Activated CD4-positive, alpha-beta T cell treated with anti-CD3 and anti-CD28 coated beads for 36 hours (primary cell): ENCODE measurements at regions of chr20 and their contacts with region 1.

Region 1: GRCh38 chr20:38033310-38034107 is at the starts of genes RPRD1B and TTI1:
- DNase-seq: peak; percentile 93
- ATAC-seq: peak; percentile 85
- H3K4me3 Mint-ChIP-seq: peak within 1 kb of the TSS; percentile 94
- H3K27ac Mint-ChIP-seq: peak within 1 kb of the TSS; percentile 98
- H3K4me1 Mint-ChIP-seq: peaks cover 65% of the 10 kb centered on the region
- H3K27me3 Mint-ChIP-seq: no peaks in the 10 kb centered on the region
- total RNA-seq, gene RPRD1B: 29.9 to 36.4 TPM
- total RNA-seq, gene TTI1: 35.6 to 36.7 TPM

Region 2: DNA sequence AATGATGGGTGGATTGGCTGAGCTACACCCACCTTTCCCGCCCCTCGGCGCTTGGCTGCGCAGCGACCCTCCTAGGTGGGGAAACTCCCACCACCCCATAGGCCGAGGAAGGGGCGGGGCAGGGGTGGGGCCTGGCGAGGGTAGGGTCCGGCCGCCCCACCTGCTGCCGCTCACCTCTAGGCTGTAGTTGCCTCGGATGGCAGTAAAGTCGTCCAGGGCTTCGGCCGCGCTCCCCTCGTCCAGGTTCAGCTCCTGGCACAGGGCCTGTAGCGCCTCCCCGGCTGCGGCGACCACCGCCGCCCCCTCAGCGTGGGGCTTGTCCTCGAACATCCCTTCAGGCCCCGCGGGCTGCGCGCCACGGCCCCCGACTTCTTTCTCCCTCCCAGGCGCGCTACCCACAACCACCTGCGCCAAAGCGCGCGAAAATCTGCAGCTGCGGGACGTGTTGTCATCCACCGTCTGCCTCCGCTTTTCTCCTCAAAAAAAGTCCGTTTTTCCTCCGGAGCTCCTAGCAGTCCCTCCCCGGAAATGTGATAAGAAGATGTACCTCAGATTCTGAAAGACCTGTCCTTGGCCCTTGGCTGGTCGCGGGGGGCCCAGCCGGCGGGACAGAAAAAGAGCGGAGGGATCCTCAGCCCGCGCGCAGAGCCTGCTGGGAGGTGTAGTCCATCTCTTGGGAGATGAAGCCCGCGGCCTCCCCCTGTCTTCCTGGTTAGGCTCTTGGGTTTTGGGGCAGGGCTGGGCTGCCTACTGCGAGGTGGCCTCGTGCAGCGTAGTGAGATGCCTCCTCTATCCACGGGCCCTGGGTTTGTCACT is 937.7 kb before region 1 on chr20 and contains the start of gene RBL1:
- CTCF ChIA-PET with region 1: no interaction called
- POLR2A ChIA-PET with region 1: no interaction called
- intact Hi-C with region 1: loop called in 1 of 2 experiments (anchors 2 kb)
- DNase-seq: peak; percentile 94
- ATAC-seq: peak; percentile 83
- H3K4me3 Mint-ChIP-seq: peak within 1 kb of the TSS; percentile 95
- H3K27ac Mint-ChIP-seq: peak within 1 kb of the TSS; percentile 100
- H3K4me1 Mint-ChIP-seq: peaks cover 26% of the 10 kb centered on the region
- H3K27me3 Mint-ChIP-seq: no peaks in the 10 kb centered on the region
- total RNA-seq, gene RBL1: 39.5 to 43.2 TPM

Region 3: GRCh38 chr20:37226889-37227288 is 806.6 kb before region 1 on chr20:
- CTCF ChIA-PET with region 1: no interaction called
- POLR2A ChIA-PET with region 1: no interaction called
- intact Hi-C with region 1: no loop called
- DNase-seq: no peak
- ATAC-seq: no peak
- H3K4me3 Mint-ChIP-seq: no peak overlapping the region
- H3K27ac Mint-ChIP-seq: no peak overlapping the region
- H3K4me1 Mint-ChIP-seq: no peaks in the 10 kb centered on the region
- H3K27me3 Mint-ChIP-seq: no peaks in the 10 kb centered on the region

Region 4: DNA sequence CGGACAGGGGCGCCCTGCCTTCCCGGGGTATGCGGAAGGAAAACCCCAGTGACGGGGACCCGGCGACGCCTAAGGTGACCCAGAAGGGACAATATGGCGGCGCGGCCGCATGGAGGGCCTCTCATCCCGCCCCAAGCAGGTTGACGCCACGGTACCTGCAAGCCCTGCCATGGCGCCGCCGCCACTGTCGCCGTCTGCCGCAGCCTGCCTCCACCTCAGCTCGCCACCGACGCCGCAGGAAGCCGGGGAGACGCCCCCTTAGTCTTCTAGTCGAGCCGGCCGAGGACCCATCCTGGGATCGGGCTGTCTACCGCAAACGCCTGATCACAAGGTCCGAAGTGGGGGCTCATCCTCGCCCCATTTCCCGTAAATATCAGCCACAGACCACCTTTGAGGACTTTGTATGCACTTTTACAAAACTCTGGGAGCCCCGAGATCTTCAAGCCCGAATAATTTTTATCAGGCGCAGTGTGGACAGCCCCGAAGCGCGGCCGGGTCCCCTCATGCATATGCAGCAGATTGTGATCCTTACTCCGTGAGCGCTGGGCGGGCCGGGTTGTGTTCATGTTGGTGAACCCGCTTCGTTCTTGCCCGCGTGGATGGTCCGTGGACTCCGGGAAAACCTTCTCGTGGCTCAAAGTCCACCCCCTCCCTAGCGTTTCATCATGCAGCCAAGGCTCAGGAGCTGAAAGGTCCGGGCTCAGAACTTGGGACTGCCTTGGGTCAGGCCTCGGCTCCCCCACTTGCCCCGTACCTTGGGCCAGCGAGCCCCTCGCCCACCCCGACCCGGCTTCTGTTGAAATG is 505.7 kb before region 1 on chr20 and contains the start of gene BLCAP:
- CTCF ChIA-PET with region 1: no interaction called
- POLR2A ChIA-PET with region 1: no interaction called
- intact Hi-C with region 1: loop called in 1 of 2 experiments (anchors 1 kb)
- DNase-seq: peak; percentile 94
- ATAC-seq: peak; percentile 89
- H3K4me3 Mint-ChIP-seq: peak within 1 kb of the TSS; percentile 76
- H3K27ac Mint-ChIP-seq: peak within 1 kb of the TSS; percentile 98
- H3K4me1 Mint-ChIP-seq: peaks cover 43% of the 10 kb centered on the region
- H3K27me3 Mint-ChIP-seq: no peaks in the 10 kb centered on the region
- total RNA-seq, gene BLCAP: 17.7 to 18.6 TPM

Region 5: DNA sequence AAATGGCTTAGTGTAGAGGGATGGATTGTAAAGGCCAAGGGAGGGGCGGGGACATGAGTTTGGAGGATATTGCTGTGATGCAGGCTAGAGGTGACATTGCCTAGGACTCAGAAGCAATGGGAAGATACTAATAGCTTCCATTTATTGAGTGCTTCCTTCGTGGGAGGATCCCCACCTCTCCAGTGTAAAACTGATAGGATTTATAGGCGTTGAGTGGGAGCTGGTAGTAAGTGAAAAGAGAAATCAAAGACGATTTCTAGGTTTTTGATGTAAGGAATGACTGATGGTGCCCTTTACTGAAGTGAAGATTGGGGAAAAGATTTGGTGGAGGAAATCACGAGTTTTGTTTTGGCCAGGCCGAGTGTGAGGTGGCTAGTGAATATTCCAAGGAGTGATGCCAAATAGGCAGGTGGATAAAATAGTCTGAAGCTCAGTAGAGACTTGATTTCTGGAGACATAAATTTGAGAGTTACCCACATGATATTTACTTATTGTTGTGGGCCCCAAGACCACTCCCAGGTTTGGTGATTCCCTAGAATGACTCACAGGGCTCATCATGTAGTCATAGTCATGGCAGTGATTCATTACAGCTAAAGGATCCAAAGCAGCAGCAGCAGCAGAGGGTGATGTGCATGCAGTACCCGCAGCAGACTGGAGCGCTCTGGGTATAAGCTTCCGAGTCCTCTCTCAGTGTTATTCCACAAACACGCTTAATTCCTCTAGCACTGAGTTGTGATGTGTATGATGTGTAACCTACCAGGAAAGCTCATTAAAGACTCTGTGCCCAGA is 10.2 kb after region 1 on chr20:
- CTCF ChIA-PET with region 1: interaction called, 5 read pairs
- POLR2A ChIA-PET with region 1: interaction called, 18 read pairs
- intact Hi-C with region 1: no loop called
- DNase-seq: peak; percentile 66
- ATAC-seq: peak; percentile 99
- H3K4me3 Mint-ChIP-seq: no peak overlapping the region
- H3K27ac Mint-ChIP-seq: peak overlapping the region; percentile 14
- H3K4me1 Mint-ChIP-seq: peaks cover 45% of the 10 kb centered on the region
- H3K27me3 Mint-ChIP-seq: no peaks in the 10 kb centered on the region

Region 6: GRCh38 chr20:38446441-38447209 is 413.1 kb after region 1 on chr20:
- CTCF ChIA-PET with region 1: no interaction called
- POLR2A ChIA-PET with region 1: no interaction called
- intact Hi-C with region 1: loop called in 1 of 2 experiments (anchors 1 kb)
- DNase-seq: peak; percentile 97
- ATAC-seq: peak; percentile 96
- H3K4me3 Mint-ChIP-seq: peak overlapping the region; percentile 68
- H3K27ac Mint-ChIP-seq: peak overlapping the region; percentile 63
- H3K4me1 Mint-ChIP-seq: peaks cover 29% of the 10 kb centered on the region
- H3K27me3 Mint-ChIP-seq: peaks cover 3% of the 10 kb centered on the region

Region 7: DNA sequence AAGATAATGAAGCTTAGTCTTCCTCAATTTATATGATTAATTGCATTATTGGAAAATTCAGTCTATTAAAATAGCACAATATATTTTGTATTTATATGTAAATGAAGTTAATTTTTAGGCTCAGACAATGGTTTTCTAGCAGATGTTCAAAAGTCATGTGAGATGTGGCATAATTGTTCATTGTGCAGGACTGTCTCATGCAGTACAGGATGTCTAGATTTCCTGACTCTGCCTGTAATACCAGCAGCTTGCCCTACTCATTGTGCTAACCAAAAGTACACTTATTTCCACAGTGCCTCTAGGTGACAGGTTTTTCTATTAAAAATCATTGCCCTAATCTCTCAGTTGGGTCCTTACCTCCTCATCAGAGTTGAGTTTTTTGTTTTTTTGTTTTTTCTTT is 451.5 kb after region 1 on chr20:
- CTCF ChIA-PET with region 1: no interaction called
- POLR2A ChIA-PET with region 1: no interaction called
- intact Hi-C with region 1: no loop called
- DNase-seq: no peak
- ATAC-seq: no peak
- H3K4me3 Mint-ChIP-seq: no peak overlapping the region
- H3K27ac Mint-ChIP-seq: no peak overlapping the region
- H3K4me1 Mint-ChIP-seq: peaks cover 9% of the 10 kb centered on the region
- H3K27me3 Mint-ChIP-seq: no peaks in the 10 kb centered on the region